HEK293T (cell line): ENCODE measurements at regions of chr3 and their contacts with region 1.

Region 1: GRCh38 chr3:128123538-128124368 is at the start of gene RUVBL1:
- DNase-seq: peak; percentile 98

Region 2: GRCh38 chr3:128112357-128112968 is 11.3 kb before region 1 on chr3:
- CTCF ChIA-PET with region 1: no interaction called
- POLR2A ChIA-PET with region 1: interaction called, 11 read pairs
- DNase-seq: no peak

Region 3: GRCh38 chr3:128153156-128154041 is 29.6 kb after region 1 on chr3 and contains the start of gene EEFSEC:
- CTCF ChIA-PET with region 1: interaction called, 3 read pairs
- POLR2A ChIA-PET with region 1: interaction called, 18 read pairs
- DNase-seq: peak; percentile 80